ENCODE measurements at regions of chr1 and their contacts with region 1.

Region 1: DNA sequence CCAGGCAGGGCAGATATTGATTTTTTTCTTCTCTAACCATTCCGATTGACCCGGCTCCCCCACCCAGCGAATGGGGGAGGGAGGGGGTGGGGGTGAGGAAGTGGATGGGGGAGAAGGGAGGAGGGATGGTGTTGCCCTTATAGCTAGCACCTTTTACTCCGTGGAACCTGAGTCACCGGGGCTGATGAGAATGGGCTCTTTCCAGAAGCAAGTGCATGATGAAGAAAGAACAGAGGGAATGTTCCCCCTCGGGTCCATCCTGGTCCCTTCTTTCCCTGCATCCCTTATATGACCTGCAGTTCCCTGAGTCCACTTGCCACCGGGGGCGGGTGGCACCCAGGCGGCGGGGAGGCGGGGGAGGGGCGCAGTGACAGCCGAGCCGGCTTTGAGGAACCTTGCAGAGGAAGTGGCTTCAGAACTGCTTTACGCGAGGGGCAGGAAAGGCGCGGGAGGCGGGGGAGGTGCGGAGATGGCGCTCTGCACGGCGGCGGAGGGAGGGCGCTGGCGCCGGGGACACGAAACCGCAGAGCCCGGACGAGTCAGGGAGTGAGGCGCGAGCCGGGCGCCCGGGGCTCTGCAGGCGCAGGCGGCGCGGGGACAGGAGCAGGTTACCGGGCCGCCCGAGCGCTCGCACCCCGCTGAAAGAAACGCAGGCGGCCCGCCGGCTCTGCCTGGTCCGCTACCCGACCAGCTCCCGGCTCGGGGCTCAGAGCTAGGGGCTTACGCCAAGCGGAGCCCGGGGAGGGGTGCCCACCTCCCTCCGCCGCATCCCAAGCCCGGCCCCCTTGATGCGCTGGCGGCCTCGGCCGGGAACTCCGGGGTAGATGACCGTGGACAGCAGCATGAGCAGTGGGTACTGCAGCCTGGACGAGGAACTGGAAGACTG is 49.7 kb downstream of the RASSF5 start:
- DNase-seq: no peak
- ATAC-seq: peak; percentile 76
- H3K4me3 ChIP-seq: peak overlapping the region; percentile 95
- H3K27ac ChIP-seq: peak overlapping the region; percentile 98
- H3K4me1 ChIP-seq: peaks cover 42% of the 10 kb centered on the region
- H3K27me3 ChIP-seq: no peaks in the 10 kb centered on the region
- CTCF ChIP-seq: no peak
- EP300 ChIP-seq: peak in 1 of 2 experiments; percentile 51; a peak in 2 of 4 replicates
- POLR2A ChIP-seq: peak; percentile 90
- RAD21 ChIP-seq: no peak

Region 2: DNA sequence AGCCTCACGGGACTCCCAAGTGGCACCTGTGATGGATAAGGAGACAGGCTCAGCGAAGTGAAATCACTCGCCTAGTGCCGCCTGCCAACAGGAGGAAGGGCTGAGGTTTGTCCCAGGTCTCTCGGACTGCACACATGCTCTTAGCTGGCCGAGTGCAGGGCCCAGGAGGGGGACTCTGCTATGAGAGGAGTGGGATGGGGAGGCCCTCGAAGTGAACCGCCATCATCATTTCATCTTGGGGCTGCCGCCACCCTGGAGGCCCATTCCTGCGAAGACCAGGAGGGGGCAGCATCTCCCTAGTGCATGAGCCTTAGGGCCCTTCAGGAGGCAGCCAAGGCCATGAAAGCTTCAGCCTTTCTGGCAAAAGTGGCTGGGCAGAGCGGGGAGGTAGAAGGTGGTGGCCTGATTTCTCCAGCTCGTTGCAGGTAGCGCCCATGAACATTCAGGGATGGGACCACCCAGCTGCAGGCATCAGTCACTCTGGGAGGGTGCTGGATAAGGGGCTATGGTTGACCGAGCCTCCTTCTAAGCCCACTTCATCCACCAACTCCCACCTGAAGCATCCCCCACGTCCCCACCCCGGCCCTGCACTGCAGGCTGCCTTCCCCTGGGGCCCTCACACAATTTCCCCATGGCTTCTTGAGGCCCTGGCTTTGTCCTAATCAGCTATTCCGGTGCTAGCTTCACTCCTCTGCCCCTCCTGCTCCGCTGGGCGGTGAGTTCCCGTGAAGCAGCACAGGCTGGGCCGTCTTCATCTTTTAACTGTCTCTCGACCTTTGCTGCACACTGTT is 66.8 kb before region 1 on chr1:
- CTCF ChIA-PET with region 1: interaction called, 15 read pairs
- POLR2A ChIA-PET with region 1: interaction called, 8 read pairs
- RAD21 ChIA-PET with region 1: interaction called, 16 read pairs
- SMC1A ChIA-PET with region 1: interaction called, 24 read pairs
- in situ Hi-C with region 1: no loop called
- intact Hi-C with region 1: no loop called
- DNase-seq: no peak
- ATAC-seq: peak; percentile 99
- H3K4me3 ChIP-seq: no peak overlapping the region
- H3K27ac ChIP-seq: no peak overlapping the region
- H3K4me1 ChIP-seq: peaks cover 5% of the 10 kb centered on the region
- H3K27me3 ChIP-seq: no peaks in the 10 kb centered on the region
- CTCF ChIP-seq: peak; percentile 91 to 97 (median 96)
- EP300 ChIP-seq: no peak
- POLR2A ChIP-seq: no peak
- RAD21 ChIP-seq: peak; percentile 97

Region 3: GRCh38 chr1:206496131-206496793 is 60.7 kb before region 1 on chr1:
- CTCF ChIA-PET with region 1: interaction called, 11 read pairs
- POLR2A ChIA-PET with region 1: interaction called, 8 read pairs
- RAD21 ChIA-PET with region 1: interaction called, 16 read pairs
- SMC1A ChIA-PET with region 1: interaction called, 24 read pairs
- in situ Hi-C with region 1: no loop called
- intact Hi-C with region 1: no loop called
- DNase-seq: no peak
- ATAC-seq: peak; percentile 88
- H3K4me3 ChIP-seq: peak overlapping the region; percentile 34; the same call in 1 of the 2 replicates
- H3K27ac ChIP-seq: peak overlapping the region; percentile 90
- H3K4me1 ChIP-seq: peaks cover 39% of the 10 kb centered on the region
- H3K27me3 ChIP-seq: no peaks in the 10 kb centered on the region
- CTCF ChIP-seq: no peak
- EP300 ChIP-seq: 0 out of 4 replicates have a peak, but pooled peaks of 1 of the 2 experiments have one; percentile 29
- POLR2A ChIP-seq: no peak
- RAD21 ChIP-seq: no peak

Region 4: GRCh38 chr1:206507284-206508129 is 49.5 kb before region 1 on chr1 and contains the start of gene RASSF5:
- CTCF ChIA-PET with region 1: interaction called, 17 read pairs
- POLR2A ChIA-PET with region 1: interaction called, 16 read pairs
- RAD21 ChIA-PET with region 1: interaction called, 24 read pairs
- SMC1A ChIA-PET with region 1: interaction called, 23 read pairs
- in situ Hi-C with region 1: no loop called
- intact Hi-C with region 1: no loop called
- DNase-seq: no peak
- ATAC-seq: peak; percentile 78
- H3K4me3 ChIP-seq: peak within 1 kb of the TSS; percentile 72
- H3K27ac ChIP-seq: peak within 1 kb of the TSS; percentile 29; the same call in 1 of the 2 replicates
- H3K4me1 ChIP-seq: peaks cover 41% of the 10 kb centered on the region
- H3K27me3 ChIP-seq: no peaks in the 10 kb centered on the region
- CTCF ChIP-seq: no peak
- EP300 ChIP-seq: 0 out of 4 replicates have a peak, but pooled peaks of 1 of the 2 experiments have one; percentile 21
- POLR2A ChIP-seq: peak; percentile 83
- RAD21 ChIP-seq: no peak
- polyA plus RNA-seq, gene RASSF5: 14.0 to 25.4 TPM

Region 5: GRCh38 chr1:206575165-206575893 is 18.3 kb after region 1 on chr1:
- CTCF ChIA-PET with region 1: interaction called, 330 read pairs
- POLR2A ChIA-PET with region 1: interaction called, 117 read pairs
- RAD21 ChIA-PET with region 1: interaction called, 52 read pairs
- SMC1A ChIA-PET with region 1: interaction called, 476 read pairs
- in situ Hi-C with region 1: no loop called
- intact Hi-C with region 1: loop called (anchors 2 kb)
- DNase-seq: no peak
- ATAC-seq: peak; percentile 57
- H3K4me3 ChIP-seq: peak overlapping the region; percentile 66
- H3K27ac ChIP-seq: peak overlapping the region; percentile 92
- H3K4me1 ChIP-seq: peaks cover 62% of the 10 kb centered on the region
- H3K27me3 ChIP-seq: no peaks in the 10 kb centered on the region
- CTCF ChIP-seq: no peak
- EP300 ChIP-seq: 0 out of 4 replicates have a peak, but pooled peaks of 1 of the 2 experiments have one; percentile 8
- POLR2A ChIP-seq: no peak
- RAD21 ChIP-seq: no peak

Region 6: DNA sequence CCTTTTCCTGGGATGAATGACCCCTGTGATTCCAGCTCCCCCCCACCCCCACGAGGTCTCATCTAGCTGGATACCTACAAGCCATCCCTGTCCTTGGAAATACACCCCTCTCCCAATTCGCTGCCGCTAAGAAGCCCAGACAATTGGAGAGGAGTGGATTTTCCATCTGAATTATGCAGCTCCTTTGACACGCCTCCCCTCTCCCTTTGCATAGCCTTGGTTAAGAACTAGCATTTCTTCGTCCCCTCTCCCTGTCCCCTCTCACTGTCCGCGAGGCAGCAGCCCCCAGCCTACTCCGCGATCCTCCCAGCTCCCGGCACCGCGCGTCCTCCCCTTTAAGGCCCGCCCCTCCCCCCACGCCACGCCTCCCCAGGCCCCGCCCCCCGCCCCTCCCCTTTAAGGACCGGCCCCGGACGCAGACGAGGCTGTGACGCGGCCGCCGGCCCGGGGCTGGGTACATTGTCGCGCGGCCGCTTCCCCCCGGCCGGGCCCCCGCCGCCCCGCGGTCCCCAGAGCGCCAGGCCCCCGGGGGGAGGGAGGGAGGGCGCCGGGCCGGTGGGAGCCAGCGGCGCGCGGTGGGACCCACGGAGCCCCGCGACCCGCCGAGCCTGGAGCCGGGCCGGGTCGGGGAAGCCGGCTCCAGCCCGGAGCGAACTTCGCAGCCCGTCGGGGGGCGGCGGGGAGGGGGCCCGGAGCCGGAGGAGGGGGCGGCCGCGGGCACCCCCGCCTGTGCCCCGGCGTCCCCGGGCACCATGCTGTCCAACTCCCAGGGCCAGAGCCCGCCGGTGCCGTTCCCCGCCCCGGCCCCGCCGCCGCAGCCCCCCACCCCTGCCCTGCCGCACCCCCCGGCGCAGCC is 127.7 kb after region 1 on chr1 and contains the start of gene MAPKAPK2:
- CTCF ChIA-PET with region 1: no interaction called
- POLR2A ChIA-PET with region 1: no interaction called
- RAD21 ChIA-PET with region 1: no interaction called
- SMC1A ChIA-PET with region 1: no interaction called
- in situ Hi-C with region 1: no loop called
- intact Hi-C with region 1: loop called (anchors 5 kb)
- DNase-seq: no peak
- ATAC-seq: peak; percentile 55
- H3K4me3 ChIP-seq: peak within 1 kb of the TSS; percentile 91
- H3K27ac ChIP-seq: peak within 1 kb of the TSS; percentile 86
- H3K4me1 ChIP-seq: peaks cover 42% of the 10 kb centered on the region
- H3K27me3 ChIP-seq: no peaks in the 10 kb centered on the region
- CTCF ChIP-seq: no peak
- EP300 ChIP-seq: no peak
- POLR2A ChIP-seq: peak; percentile 64
- RAD21 ChIP-seq: no peak
- polyA plus RNA-seq, gene MAPKAPK2: 0.72 to 4.9 TPM